ENCODE measurements at regions of chr18 and their contacts with region 1.

Region 1: DNA sequence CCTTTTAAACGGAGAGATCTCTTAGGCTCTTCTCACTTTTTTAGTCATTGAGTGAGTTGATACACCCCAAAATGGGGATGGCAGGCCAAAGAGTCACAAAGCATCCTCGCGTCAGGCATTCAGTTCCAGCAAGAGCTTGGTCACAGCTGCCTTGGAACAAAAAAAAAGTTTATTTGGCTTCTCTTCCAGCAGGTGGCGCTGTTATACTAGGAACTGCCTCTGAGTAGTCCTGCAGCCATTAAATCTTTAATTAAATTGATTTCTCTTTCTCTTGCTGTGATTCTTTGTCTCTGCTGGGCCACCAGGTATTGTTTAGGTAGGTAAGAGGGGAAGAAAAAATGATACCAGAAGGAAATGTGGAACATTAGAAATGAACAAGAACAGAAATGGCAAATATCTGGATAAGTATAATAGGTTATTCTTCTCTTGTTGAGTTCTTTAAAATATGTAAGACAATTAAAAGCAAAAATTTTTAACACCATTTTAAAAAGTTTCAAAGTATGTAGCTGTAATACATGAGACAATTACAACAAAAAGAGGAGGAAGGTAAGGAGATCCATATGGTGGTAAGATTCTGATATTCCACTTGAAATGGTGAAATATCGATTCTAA is 175.1 kb downstream of the GALNT1 start:
- DNase-seq: no peak
- H3K4me3 ChIP-seq: no peak overlapping the region
- H3K27me3 ChIP-seq: peaks cover 13% of the 10 kb centered on the region
- CTCF ChIP-seq: peak; percentile 76

Region 2: DNA sequence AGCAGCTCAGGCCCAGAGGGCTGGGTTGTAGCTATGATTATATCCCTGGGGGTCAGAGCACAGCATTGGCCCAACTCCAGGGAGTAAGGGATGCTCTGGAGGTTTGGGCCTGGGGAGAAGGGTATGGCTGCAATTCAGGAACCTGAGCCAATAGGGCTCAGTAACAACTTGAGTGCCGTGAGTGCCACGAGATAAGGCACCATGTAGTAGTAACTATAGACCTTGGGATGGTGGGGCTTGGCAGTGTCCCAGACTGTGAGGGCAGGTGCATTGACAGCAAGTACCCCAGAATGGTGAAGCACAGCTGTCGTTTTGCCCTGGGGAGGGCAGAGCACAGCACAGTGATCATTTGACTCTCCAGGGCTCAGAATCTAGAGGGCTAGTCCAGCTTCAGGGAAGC is 334.4 kb before region 1 on chr18:
- CTCF ChIA-PET with region 1: no interaction called
- POLR2A ChIA-PET with region 1: no interaction called
- DNase-seq: no peak
- H3K4me3 ChIP-seq: no peak overlapping the region
- H3K27me3 ChIP-seq: peaks cover 2% of the 10 kb centered on the region; the same call in 1 of the 2 replicates
- CTCF ChIP-seq: no peak

Region 3: GRCh38 chr18:35703043-35703688 is 53.4 kb before region 1 on chr18:
- CTCF ChIA-PET with region 1: no interaction called
- POLR2A ChIA-PET with region 1: no interaction called
- DNase-seq: no peak
- H3K4me3 ChIP-seq: no peak overlapping the region
- H3K27me3 ChIP-seq: no peaks in the 10 kb centered on the region
- CTCF ChIP-seq: no peak

Region 4: GRCh38 chr18:35740656-35741055 is 16.0 kb before region 1 on chr18:
- CTCF ChIA-PET with region 1: interaction called, 12 read pairs
- POLR2A ChIA-PET with region 1: no interaction called
- DNase-seq: no peak
- H3K4me3 ChIP-seq: no peak overlapping the region
- H3K27me3 ChIP-seq: no peaks in the 10 kb centered on the region
- CTCF ChIP-seq: no peak

Region 5: DNA sequence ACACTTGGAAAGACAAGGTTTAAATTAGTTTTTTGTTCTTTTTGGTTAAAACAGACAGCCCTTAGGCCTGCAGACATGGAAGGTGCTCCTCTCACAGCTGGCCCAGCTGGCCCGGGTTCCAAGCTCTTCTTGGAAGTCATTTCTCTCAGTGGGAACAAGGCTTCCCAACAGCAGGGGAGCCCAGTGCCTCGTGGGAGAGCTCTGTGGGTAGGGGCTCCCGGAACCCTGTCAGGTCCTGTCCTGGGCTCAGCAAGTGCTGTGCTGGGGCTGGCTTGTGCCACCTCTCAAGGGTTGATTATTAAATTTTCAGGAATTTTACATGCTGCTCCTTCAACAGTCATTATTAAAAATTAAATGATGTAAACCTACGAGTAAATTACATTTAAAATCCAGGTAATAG is 14.6 kb after region 1 on chr18:
- CTCF ChIA-PET with region 1: interaction called, 11 read pairs
- POLR2A ChIA-PET with region 1: no interaction called
- DNase-seq: no peak
- H3K4me3 ChIP-seq: no peak overlapping the region
- H3K27me3 ChIP-seq: no peaks in the 10 kb centered on the region
- CTCF ChIP-seq: no peak